ENCODE measurements at regions of chr14 and their contacts with region 1.

Region 1: DNA sequence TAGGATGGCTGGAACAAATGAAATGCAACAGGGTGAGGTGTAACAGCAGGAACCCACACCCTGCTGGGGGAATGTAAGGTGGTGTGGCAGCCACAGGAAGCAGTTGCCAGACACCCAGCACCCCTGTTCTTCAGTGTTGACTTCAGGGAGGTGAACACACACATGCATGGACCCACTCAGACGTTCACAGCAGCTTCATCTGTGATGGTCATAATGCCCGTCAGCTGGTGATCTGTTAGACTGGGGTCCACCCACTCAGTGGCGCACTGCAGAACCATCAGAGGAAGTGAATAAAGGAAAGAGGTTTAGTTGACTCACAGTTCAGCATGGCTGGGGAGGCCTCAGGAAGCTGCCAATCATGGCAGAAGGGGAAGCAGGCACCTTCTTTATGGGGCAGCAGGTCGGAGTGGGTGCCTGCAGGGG is 22.7 kb upstream of the TEX22 start:
- DNase-seq: no peak
- H3K4me3 ChIP-seq: no peak overlapping the region
- H3K27ac ChIP-seq: no peak overlapping the region
- H3K4me1 ChIP-seq: no peaks in the 10 kb centered on the region
- H3K27me3 ChIP-seq: no peaks in the 10 kb centered on the region
- CTCF ChIP-seq: no peak

Region 2: DNA sequence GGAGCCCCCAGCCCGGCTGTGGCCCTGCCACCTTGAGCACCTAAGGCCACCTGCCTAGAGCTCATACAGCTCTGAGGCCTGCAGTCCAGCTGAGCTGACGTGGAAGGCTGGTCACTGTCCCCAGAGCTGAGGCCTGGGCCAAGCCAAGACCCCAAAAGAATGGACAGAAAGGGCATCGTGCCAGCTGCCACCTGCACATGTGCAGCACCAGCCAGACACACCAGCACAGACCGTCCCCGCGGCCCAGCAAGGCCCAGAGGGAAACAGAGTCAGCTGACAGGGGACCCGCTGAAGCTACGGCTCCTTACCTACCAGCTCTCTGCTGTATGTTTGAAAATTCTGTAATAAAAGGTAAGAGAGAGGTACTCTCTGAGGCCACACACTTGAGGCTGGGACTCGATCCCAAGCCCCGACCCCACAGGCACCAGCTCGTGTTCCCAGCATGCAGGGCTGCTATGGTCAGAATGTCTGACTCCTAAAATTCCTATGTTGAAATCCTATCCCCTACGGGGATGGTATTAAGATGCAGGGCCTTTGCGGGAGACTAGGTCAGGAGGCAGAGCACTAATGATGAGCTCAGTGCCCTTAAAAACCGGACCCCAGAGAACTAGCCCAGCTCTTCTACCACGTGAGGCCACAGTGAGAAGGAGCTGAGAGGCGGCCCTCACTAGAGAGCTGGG is 100.2 kb before region 1 on chr14:
- CTCF ChIA-PET with region 1: no interaction called
- POLR2A ChIA-PET with region 1: no interaction called
- intact Hi-C with region 1: no loop called
- DNase-seq: no peak
- H3K4me3 ChIP-seq: no peak overlapping the region
- H3K27ac ChIP-seq: no peak overlapping the region
- H3K4me1 ChIP-seq: no peaks in the 10 kb centered on the region
- H3K27me3 ChIP-seq: no peaks in the 10 kb centered on the region
- CTCF ChIP-seq: no peak

Region 3: GRCh38 chr14:105398044-105398725 is 22.5 kb after region 1 on chr14 and contains the start of gene TEX22:
- CTCF ChIA-PET with region 1: no interaction called
- POLR2A ChIA-PET with region 1: no interaction called
- intact Hi-C with region 1: no loop called
- DNase-seq: peak; percentile 89
- H3K4me3 ChIP-seq: peak within 1 kb of the TSS; percentile 67
- H3K27ac ChIP-seq: peak within 1 kb of the TSS; percentile 91
- H3K4me1 ChIP-seq: peaks cover 5% of the 10 kb centered on the region
- H3K27me3 ChIP-seq: no peaks in the 10 kb centered on the region
- CTCF ChIP-seq: 0 out of 2 replicates have a peak, but pooled peaks have one; percentile 12
- total RNA-seq, gene TEX22: 2.1 and 2.7 TPM in 2 replicates

Region 4: GRCh38 chr14:105527661-105528581 is 152.3 kb after region 1 on chr14:
- CTCF ChIA-PET with region 1: interaction called, 3 read pairs
- POLR2A ChIA-PET with region 1: no interaction called
- intact Hi-C with region 1: loop called (anchors 5 kb)
- DNase-seq: peak; percentile 85
- H3K4me3 ChIP-seq: peak overlapping the region; percentile 55
- H3K27ac ChIP-seq: peak overlapping the region; percentile 58
- H3K4me1 ChIP-seq: peaks cover 15% of the 10 kb centered on the region
- H3K27me3 ChIP-seq: no peaks in the 10 kb centered on the region
- CTCF ChIP-seq: peak; percentile 73

Region 5: DNA sequence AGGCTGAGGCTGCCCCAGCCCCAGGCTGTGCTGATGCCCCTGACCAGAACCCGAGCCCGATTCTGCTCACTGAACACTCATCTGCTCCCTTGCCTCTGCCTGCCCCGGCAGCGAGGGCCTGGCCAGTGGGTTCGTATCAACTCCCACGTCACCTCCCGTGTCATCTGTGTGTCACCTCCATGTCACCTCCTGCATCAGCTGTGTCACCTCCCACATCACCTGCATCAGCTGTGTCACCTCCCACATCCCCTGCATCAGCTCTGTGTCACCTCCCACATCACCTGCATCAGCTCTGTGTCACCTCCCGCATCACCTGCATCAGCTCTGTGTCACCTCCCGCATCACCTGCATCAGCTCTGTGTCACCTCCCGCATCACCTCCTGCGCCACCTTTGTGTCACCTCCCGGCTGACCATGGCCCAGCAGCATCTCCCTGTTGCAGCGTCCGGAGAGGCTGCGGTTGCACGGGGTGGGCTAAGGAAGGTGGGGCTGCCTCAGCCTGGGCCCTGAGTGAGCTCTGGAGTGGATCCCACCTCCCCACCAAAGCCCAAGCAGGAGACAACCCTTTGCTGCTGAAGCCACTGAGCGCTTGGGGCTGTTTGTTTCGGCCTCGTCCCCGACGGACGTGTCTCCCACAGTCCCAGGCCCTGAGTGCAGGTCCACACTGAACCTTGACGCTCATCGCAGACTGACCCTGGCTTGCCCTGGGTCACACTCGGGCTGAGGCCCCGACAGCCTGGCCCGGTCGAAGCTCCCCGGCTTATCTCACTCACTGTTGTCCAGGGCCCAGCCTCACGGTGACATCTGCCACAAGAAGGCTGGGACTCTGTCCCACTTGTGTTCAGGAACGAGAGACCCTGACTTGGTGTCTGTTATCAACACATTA is 162.8 kb after region 1 on chr14:
- CTCF ChIA-PET with region 1: interaction called, 10 read pairs
- POLR2A ChIA-PET with region 1: no interaction called
- intact Hi-C with region 1: no loop called
- DNase-seq: no peak
- H3K4me3 ChIP-seq: no peak overlapping the region
- H3K27ac ChIP-seq: no peak overlapping the region
- H3K4me1 ChIP-seq: no peaks in the 10 kb centered on the region
- H3K27me3 ChIP-seq: no peaks in the 10 kb centered on the region
- CTCF ChIP-seq: no peak

Measured in A673 (cell line).